Endothelial cell of umbilical vein (primary cell): ENCODE measurements at regions of chr7 and their contacts with region 1.

Region 1: GRCh38 chr7:85186521-85187241 is at the start of gene SEMA3D:
- DNase-seq: peak; percentile 87
- H3K4me3 ChIP-seq: peak within 1 kb of the TSS; percentile 52 to 79 (median 54)
- H3K27ac ChIP-seq: peak within 1 kb of the TSS; percentile 40
- H3K4me1 ChIP-seq: peaks cover 5% of the 10 kb centered on the region
- H3K27me3 ChIP-seq: no peaks in the 10 kb centered on the region
- CTCF ChIP-seq: peak; percentile 92 to 98
- POLR2A ChIP-seq: no peak
- total RNA-seq, gene SEMA3D: 10.3 and 14.1 TPM in 2 replicates

Region 2: DNA sequence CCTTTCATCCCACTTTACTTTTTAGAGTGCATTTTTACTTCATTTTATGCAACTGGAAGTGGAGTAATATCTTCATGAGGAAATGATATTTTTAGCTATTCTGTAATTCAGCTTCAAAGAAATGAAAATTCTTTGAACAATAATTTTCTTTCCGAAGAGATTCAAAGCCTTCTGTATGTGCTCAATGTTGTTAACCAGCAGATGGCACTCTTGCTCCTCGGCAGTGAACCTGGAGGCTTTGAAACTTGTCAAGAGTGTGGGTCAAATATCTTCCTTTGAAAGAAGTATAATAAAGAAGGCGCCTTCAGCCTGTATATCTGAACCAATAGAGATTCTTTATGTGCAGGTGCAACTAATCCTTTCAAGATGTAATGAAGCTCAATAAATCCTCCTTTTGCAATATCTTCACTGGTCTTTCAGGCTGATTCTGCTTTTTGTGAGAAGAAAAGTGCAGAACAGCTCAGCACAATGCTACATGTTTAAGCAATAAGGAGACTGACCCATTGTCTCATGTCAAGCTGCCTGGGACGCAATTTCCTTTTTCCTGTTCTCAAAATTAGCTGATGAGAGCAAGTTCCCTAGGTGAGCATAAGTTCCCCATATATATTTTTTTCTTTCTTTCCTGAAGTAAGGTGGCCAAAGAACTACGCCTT is 1250.5 kb before region 1 on chr7:
- CTCF ChIA-PET with region 1: interaction called, 3 read pairs
- POLR2A ChIA-PET with region 1: no interaction called
- dilution Hi-C with region 1: no loop called
- intact Hi-C with region 1: loop called (anchors 5 kb)
- DNase-seq: peak; percentile 78
- H3K4me3 ChIP-seq: no peak overlapping the region
- H3K27ac ChIP-seq: no peak overlapping the region
- H3K4me1 ChIP-seq: no peaks in the 10 kb centered on the region
- H3K27me3 ChIP-seq: no peaks in the 10 kb centered on the region
- CTCF ChIP-seq: peak; percentile 76 to 78
- POLR2A ChIP-seq: no peak

Region 3: DNA sequence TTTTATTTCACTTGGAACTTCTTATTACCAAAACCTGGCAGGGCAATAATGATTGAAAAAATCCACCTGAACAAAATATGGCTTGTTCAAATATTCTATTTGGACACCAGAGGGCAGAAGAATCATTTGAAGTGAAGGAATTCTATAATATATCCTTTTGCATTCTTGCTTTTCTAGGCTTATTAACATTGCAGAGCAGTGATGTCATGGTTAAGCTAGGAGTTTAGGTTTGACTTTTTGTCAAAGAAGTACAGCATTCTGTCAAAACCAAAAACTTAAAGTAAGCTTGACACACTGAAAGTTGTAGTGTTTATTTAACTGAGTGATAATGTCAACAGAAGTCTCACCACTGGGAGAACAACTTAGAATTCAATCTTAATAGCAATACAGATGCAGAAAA is 155.8 kb before region 1 on chr7:
- CTCF ChIA-PET with region 1: interaction called, 12 read pairs
- POLR2A ChIA-PET with region 1: no interaction called
- dilution Hi-C with region 1: no loop called
- intact Hi-C with region 1: no loop called
- DNase-seq: peak; percentile 50
- H3K4me3 ChIP-seq: no peak overlapping the region
- H3K27ac ChIP-seq: no peak overlapping the region
- H3K4me1 ChIP-seq: peaks cover 2% of the 10 kb centered on the region
- H3K27me3 ChIP-seq: no peaks in the 10 kb centered on the region
- CTCF ChIP-seq: peak; percentile 17 to 19
- POLR2A ChIP-seq: no peak

Region 4: GRCh38 chr7:85135977-85136376 is 50.7 kb before region 1 on chr7:
- CTCF ChIA-PET with region 1: interaction called, 4 read pairs
- POLR2A ChIA-PET with region 1: no interaction called
- dilution Hi-C with region 1: no loop called
- intact Hi-C with region 1: loop called (anchors 5 kb)
- DNase-seq: peak; percentile 66
- H3K4me3 ChIP-seq: no peak overlapping the region
- H3K27ac ChIP-seq: peak overlapping the region; percentile 59
- H3K4me1 ChIP-seq: peaks cover 18% of the 10 kb centered on the region
- H3K27me3 ChIP-seq: no peaks in the 10 kb centered on the region
- CTCF ChIP-seq: no peak
- POLR2A ChIP-seq: peak; percentile 62

Region 5: GRCh38 chr7:85464042-85464651 is 277.5 kb after region 1 on chr7:
- CTCF ChIA-PET with region 1: interaction called, 6 read pairs
- POLR2A ChIA-PET with region 1: no interaction called
- dilution Hi-C with region 1: no loop called
- intact Hi-C with region 1: loop called (anchors 5 kb)
- DNase-seq: peak; percentile 13
- H3K4me3 ChIP-seq: no peak overlapping the region
- H3K27ac ChIP-seq: no peak overlapping the region
- H3K4me1 ChIP-seq: no peaks in the 10 kb centered on the region
- H3K27me3 ChIP-seq: no peaks in the 10 kb centered on the region
- CTCF ChIP-seq: no peak
- POLR2A ChIP-seq: no peak

Region 6: GRCh38 chr7:85750454-85750949 is 563.8 kb after region 1 on chr7:
- CTCF ChIA-PET with region 1: interaction called, 8 read pairs
- POLR2A ChIA-PET with region 1: no interaction called
- dilution Hi-C with region 1: no loop called
- intact Hi-C with region 1: loop called (anchors 5 kb)
- DNase-seq: peak; percentile 44
- H3K4me3 ChIP-seq: no peak overlapping the region
- H3K27ac ChIP-seq: no peak overlapping the region
- H3K4me1 ChIP-seq: no peaks in the 10 kb centered on the region
- H3K27me3 ChIP-seq: peaks cover 2 to 5% of the 10 kb centered on the region in 2 experiments
- CTCF ChIP-seq: peak; percentile 74 to 79
- POLR2A ChIP-seq: no peak

Region 7: GRCh38 chr7:85851571-85852193 is 665.0 kb after region 1 on chr7:
- CTCF ChIA-PET with region 1: interaction called, 4 read pairs
- POLR2A ChIA-PET with region 1: no interaction called
- dilution Hi-C with region 1: no loop called
- intact Hi-C with region 1: loop called (anchors 10 kb)
- DNase-seq: peak; percentile 42
- H3K4me3 ChIP-seq: no peak overlapping the region
- H3K27ac ChIP-seq: no peak overlapping the region
- H3K4me1 ChIP-seq: no peaks in the 10 kb centered on the region
- H3K27me3 ChIP-seq: no peaks in the 10 kb centered on the region
- CTCF ChIP-seq: peak; percentile 6 to 11
- POLR2A ChIP-seq: no peak